ENCODE measurements at regions of chr5 and their contacts with region 1.

Region 1: DNA sequence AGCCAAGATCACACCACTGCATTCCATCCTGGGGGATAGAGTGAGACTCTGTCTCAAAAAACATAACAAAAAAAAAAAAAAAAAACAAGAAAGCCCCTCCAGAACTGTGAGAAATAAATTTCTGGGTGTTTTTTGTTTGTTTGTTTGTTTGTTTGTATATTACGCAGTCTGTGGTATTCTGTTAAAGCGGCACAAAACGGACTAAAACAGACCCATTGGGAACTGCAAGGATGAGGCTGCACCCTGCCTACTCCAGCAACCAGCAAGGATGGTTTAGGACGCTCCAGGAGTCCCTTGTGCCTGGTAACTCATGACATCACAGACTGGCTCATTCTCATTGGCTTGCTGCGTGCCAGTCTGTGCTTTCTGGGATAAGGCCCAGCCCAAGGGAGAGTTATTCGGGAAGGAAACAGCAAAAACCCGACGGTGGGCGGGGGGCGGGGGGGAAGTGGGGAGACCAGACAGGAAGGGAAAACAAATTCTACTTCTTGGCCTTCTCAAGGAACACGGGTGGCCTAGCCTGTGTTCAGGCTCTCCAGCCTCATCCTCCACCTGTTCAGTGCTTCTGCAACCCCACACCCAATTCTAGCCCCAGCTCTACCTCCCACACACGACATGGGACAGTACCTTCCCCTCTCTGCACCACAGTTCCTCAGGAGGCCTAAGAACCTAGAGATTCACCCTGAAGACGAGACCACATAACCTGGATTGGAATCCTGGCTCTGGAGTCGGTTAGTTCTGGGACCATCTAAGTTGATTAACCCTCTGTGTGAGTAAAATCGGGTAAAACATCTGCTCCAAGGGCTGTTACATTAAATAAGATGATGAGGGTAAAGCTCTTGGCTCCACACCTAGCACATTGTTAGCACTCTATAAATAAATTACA is 2.8 kb downstream of the CD74 start:
- DNase-seq: peak; percentile 81
- ATAC-seq: peak; percentile 4
- H3K4me3 ChIP-seq: peak overlapping the region; percentile 78 to 100 (median 94)
- H3K4me3 Mint-ChIP-seq: peak overlapping the region; percentile 95
- H3K27ac ChIP-seq: peak overlapping the region; percentile 99 to 100
- H3K27ac Mint-ChIP-seq: peak overlapping the region; percentile 99
- H3K4me1 ChIP-seq: peaks cover 52 to 66% of the 10 kb centered on the region in 2 donors
- H3K4me1 Mint-ChIP-seq: peaks cover 68% of the 10 kb centered on the region
- H3K27me3 ChIP-seq: no peaks in the 10 kb centered on the region
- H3K27me3 Mint-ChIP-seq: no peaks in the 10 kb centered on the region
- CTCF ChIP-seq: no peak

Region 2: DNA sequence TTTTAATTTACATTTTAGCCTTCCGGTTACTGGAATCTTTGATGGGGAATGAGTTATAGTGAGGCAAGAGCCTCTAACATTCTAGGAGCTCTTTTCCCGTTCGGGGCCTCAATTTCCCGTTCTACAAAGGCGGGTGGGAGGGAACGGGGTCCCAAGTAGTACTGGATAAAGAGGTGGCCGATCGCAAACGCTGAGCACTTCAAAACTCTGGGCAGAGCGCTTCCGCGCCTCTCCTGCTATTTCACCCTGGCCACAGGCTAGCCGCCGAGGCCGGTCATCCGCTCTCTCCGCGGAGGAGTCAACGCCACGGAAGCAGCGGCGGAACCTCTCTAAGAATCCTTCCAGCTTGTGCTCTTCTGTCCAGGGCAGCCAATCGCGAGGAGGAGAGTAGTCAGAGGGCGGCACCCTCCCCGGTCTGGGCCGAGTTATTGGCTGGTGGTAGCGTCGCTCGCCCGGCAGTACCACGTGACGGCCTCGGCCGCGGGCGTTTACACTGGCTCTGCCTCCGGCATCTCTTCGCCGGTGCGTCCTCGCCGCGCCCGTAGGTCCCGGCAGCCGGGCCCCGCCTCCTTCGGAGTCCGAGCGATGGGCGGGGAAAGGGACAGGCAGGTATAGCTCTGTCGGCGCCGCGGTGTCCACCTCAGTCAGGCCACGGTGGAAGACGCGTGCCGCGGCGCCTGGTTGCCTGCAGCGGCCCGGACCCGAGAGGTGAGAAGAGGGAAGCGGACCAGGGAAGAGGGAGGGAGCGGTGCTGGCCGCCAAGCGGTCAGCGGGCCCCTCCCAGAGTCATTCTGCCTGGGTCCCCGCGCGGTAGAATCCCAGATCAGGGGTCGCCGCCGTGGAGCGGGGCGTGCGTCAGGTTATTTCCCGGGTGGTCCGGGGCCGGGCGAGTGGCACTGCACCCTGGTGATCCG is 449.4 kb before region 1 on chr5 and contains the start of gene SLC26A2:
- CTCF ChIA-PET with region 1: no interaction called
- POLR2A ChIA-PET with region 1: no interaction called
- intact Hi-C with region 1: loop called (anchors 5 kb)
- DNase-seq: peak; percentile 95
- ATAC-seq: peak; percentile 97
- H3K4me3 ChIP-seq: peak within 1 kb of the TSS; percentile 54 to 85 (median 79)
- H3K4me3 Mint-ChIP-seq: peak within 1 kb of the TSS; percentile 93
- H3K27ac ChIP-seq: peak within 1 kb of the TSS; percentile 74 to 81
- H3K27ac Mint-ChIP-seq: peak within 1 kb of the TSS; percentile 96
- H3K4me1 ChIP-seq: peaks cover 20% of the 10 kb centered on the region in 2 donors
- H3K4me1 Mint-ChIP-seq: peaks cover 29% of the 10 kb centered on the region
- H3K27me3 ChIP-seq: no peaks in the 10 kb centered on the region
- H3K27me3 Mint-ChIP-seq: no peaks in the 10 kb centered on the region
- CTCF ChIP-seq: no peak
- total RNA-seq, gene SLC26A2: 13.2 and 13.5 TPM in 2 replicates

Region 3: DNA sequence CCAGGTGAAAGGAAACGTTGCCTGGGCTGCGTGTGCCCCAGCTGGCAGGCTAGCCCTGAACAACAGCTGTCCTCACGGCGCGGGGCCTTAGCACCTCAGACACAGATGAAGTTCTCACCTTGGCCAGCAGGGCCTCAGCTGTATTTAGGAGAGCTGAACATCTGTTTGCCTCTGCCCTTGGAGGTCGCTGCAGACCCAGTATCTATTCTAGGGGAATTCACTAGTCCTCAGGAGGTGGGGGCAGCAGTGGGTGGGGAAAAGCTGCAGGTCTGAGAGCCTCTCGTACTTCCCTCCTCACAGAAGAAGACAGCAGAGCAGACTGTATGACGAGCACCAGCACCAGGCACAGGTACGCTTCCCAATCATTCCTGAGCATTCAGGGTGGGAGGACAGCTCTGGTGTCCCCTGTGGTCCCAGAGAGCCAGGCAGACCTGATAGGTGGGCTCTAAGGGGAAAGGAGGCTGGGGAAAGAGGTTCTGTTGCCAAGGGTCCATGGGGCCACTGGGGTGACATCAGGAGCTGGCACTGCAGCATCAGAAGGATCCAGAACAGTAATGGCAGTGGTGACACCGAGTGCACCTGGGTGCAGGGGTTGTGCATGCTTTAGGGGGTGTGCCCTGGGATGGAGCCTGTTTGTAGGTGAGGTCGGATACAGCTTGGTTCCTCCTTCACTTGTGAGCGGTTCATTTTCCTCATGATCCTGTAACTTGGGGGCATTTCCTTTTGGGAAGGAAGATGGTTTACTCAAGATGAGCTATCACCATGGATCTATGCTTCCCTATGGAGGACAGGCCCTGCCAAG is 11.0 kb before region 1 on chr5:
- CTCF ChIA-PET with region 1: interaction called, 38 read pairs
- POLR2A ChIA-PET with region 1: interaction called, 199 read pairs
- intact Hi-C with region 1: loop called (anchors 1 kb)
- DNase-seq: peak; percentile 94
- ATAC-seq: peak; percentile 67
- H3K4me3 ChIP-seq: no peak overlapping the region
- H3K4me3 Mint-ChIP-seq: peak overlapping the region; percentile 27
- H3K27ac ChIP-seq: peak overlapping the region; percentile 54 to 63
- H3K27ac Mint-ChIP-seq: peak overlapping the region; percentile 88
- H3K4me1 ChIP-seq: peaks cover 3 to 33% of the 10 kb centered on the region in 2 donors
- H3K4me1 Mint-ChIP-seq: peaks cover 49% of the 10 kb centered on the region
- H3K27me3 ChIP-seq: no peaks in the 10 kb centered on the region
- H3K27me3 Mint-ChIP-seq: no peaks in the 10 kb centered on the region
- CTCF ChIP-seq: peak; percentile 83

Region 4: DNA sequence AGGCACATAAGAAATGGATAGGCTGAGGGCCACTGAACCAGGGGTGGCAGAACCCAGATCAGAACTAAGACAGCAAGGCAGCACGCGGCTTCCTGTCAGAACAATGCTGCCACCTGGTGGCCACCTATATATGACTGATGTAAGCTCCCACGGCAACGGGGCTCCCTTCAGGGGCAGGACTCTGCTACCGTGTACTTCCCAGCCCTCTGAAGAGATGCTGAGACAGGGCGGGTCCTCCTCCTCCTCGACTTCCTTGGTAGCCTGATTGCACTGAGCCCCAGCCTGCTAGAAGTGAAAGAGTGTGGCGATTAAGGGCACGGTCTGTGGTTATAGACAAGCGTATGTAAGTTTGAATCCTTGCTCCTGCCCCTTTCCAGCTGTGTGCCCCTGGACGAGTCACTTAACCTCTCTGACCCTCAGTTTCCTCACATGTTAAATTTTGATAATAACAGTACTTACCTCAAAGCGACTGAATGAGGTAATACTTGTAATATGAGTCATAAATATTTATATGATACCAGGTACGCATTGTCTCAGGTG is 26.3 kb after region 1 on chr5:
- CTCF ChIA-PET with region 1: interaction called, 396 read pairs
- POLR2A ChIA-PET with region 1: interaction called, 387 read pairs
- intact Hi-C with region 1: loop called (anchors 1 kb)
- DNase-seq: peak; percentile 94
- ATAC-seq: peak; percentile 93
- H3K4me3 ChIP-seq: peak overlapping the region in 1 of 5 experiments; percentile 1
- H3K4me3 Mint-ChIP-seq: peak overlapping the region; percentile 74
- H3K27ac ChIP-seq: peak overlapping the region; percentile 56 to 68
- H3K27ac Mint-ChIP-seq: peak overlapping the region; percentile 95
- H3K4me1 ChIP-seq: peaks cover 46 to 52% of the 10 kb centered on the region in 2 donors
- H3K4me1 Mint-ChIP-seq: peaks cover 42% of the 10 kb centered on the region
- H3K27me3 ChIP-seq: no peaks in the 10 kb centered on the region
- H3K27me3 Mint-ChIP-seq: no peaks in the 10 kb centered on the region
- CTCF ChIP-seq: peak; percentile 84

Region 5: GRCh38 chr5:150738862-150739261 is 329.0 kb after region 1 on chr5:
- CTCF ChIA-PET with region 1: no interaction called
- POLR2A ChIA-PET with region 1: no interaction called
- intact Hi-C with region 1: no loop called
- DNase-seq: no peak
- ATAC-seq: no peak
- H3K4me3 ChIP-seq: no peak overlapping the region
- H3K4me3 Mint-ChIP-seq: no peak overlapping the region
- H3K27ac ChIP-seq: no peak overlapping the region
- H3K27ac Mint-ChIP-seq: no peak overlapping the region
- H3K4me1 ChIP-seq: peaks cover 6 to 8% of the 10 kb centered on the region in 2 donors
- H3K4me1 Mint-ChIP-seq: peaks cover 37% of the 10 kb centered on the region
- H3K27me3 ChIP-seq: no peaks in the 10 kb centered on the region
- H3K27me3 Mint-ChIP-seq: no peaks in the 10 kb centered on the region
- CTCF ChIP-seq: no peak

Region 6: GRCh38 chr5:151213800-151214613 is 804.1 kb after region 1 on chr5:
- CTCF ChIA-PET with region 1: no interaction called
- POLR2A ChIA-PET with region 1: interaction called, 6 read pairs
- intact Hi-C with region 1: loop called (anchors 5 kb)
- DNase-seq: peak; percentile 92
- ATAC-seq: peak; percentile 74
- H3K4me3 ChIP-seq: peak overlapping the region; percentile 35 to 58 (median 38)
- H3K4me3 Mint-ChIP-seq: peak overlapping the region; percentile 79
- H3K27ac ChIP-seq: peak overlapping the region; percentile 96 to 99
- H3K27ac Mint-ChIP-seq: peak overlapping the region; percentile 99
- H3K4me1 ChIP-seq: peaks cover 98 to 100% of the 10 kb centered on the region in 2 donors
- H3K4me1 Mint-ChIP-seq: peaks cover 90% of the 10 kb centered on the region
- H3K27me3 ChIP-seq: no peaks in the 10 kb centered on the region
- H3K27me3 Mint-ChIP-seq: no peaks in the 10 kb centered on the region
- CTCF ChIP-seq: no peak

Measured in B cell (primary cell).